ENCODE measurements at regions of chr4 and their contacts with region 1.

Region 1: GRCh38 chr4:104015680-104016253 is 296.0 kb upstream of the TACR3 start:
- DNase-seq: no peak
- ATAC-seq: no peak
- H3K4me3 ChIP-seq: no peak overlapping the region
- H3K27ac ChIP-seq: no peak overlapping the region
- H3K4me1 ChIP-seq: no peaks in the 10 kb centered on the region
- H3K27me3 ChIP-seq: no peaks in the 10 kb centered on the region
- CTCF ChIP-seq: peak in 6 of 9 donors; percentile 26 to 51 (median 40)

Region 2: GRCh38 chr4:104416725-104417356 is 401.1 kb after region 1 on chr4:
- intact Hi-C with region 1: no loop called
- DNase-seq: no peak
- ATAC-seq: no peak
- H3K4me3 ChIP-seq: no peak overlapping the region
- H3K27ac ChIP-seq: no peak overlapping the region
- H3K4me1 ChIP-seq: no peaks in the 10 kb centered on the region
- H3K27me3 ChIP-seq: no peaks in the 10 kb centered on the region
- CTCF ChIP-seq: no peak

Region 3: GRCh38 chr4:105909787-105910281 is 1894.1 kb after region 1 on chr4:
- intact Hi-C with region 1: loop called in 1 of 10 experiments (anchors 5 kb)
- DNase-seq: no peak
- ATAC-seq: no peak
- H3K4me3 ChIP-seq: no peak overlapping the region
- H3K27ac ChIP-seq: no peak overlapping the region
- H3K4me1 ChIP-seq: no peaks in the 10 kb centered on the region
- H3K27me3 ChIP-seq: no peaks in the 10 kb centered on the region
- CTCF ChIP-seq: no peak

Measured in heart right ventricle (tissue), 16 donors.